ENCODE measurements at regions of chr10 and their contacts with region 1.

Region 1: GRCh38 chr10:113052076-113052830 is 102.2 kb downstream of the TCF7L2 start:
- DNase-seq: no peak
- H3K4me3 ChIP-seq: no peak overlapping the region
- H3K27ac ChIP-seq: peak overlapping the region; percentile 89 to 96
- H3K4me1 ChIP-seq: peaks cover 25 to 85% of the 10 kb centered on the region in 2 donors
- H3K27me3 ChIP-seq: no peaks in the 10 kb centered on the region
- CTCF ChIP-seq: peak in 2 of 3 experiments; percentile 18 to 40

Region 2: GRCh38 chr10:113035791-113036190 is 16.5 kb before region 1 on chr10:
- intact Hi-C with region 1: loop called (anchors 2 kb)
- DNase-seq: peak in 1 of 2 donors; percentile 72
- H3K4me3 ChIP-seq: no peak overlapping the region
- H3K27ac ChIP-seq: peak overlapping the region; percentile 63 to 82
- H3K4me1 ChIP-seq: peaks cover 8 to 36% of the 10 kb centered on the region in 2 donors
- H3K27me3 ChIP-seq: no peaks in the 10 kb centered on the region
- CTCF ChIP-seq: no peak

Region 3: DNA sequence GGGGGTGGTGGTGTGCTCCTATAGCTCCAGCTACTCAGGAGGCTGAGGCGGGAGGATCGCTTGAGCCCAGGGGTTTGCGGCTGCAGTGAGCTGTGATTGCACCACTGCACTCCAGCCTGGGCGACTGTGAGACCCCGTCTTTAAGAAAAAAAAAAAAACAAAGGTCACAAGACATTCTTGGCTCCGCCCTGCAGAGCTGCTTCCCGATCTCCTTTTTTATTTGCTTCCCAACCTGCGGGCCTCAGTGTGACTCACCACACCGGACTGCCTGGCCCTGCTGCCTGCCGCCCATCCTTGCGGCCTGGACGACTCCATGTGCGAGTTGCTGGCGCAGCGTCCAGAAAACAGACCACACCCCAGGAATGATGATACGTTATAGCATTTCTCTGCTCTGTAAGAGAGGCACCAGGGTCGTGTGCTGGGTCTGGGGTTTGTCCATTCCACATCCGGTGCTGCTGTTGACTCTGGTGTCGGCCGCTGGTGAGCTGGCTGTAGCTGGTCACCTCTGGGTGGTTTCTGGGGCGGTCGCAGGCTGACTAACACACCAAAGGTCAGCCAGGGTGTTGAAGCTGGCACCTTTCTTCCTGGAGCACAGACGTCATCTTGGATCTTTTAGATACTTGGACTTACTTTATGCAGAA is 21.4 kb after region 1 on chr10:
- intact Hi-C with region 1: loop called (anchors 2 kb)
- DNase-seq: peak; percentile 69 to 96
- H3K4me3 ChIP-seq: peak overlapping the region in 1 of 2 donors; percentile 19
- H3K27ac ChIP-seq: peak overlapping the region; percentile 83 to 87
- H3K4me1 ChIP-seq: peaks cover 11 to 36% of the 10 kb centered on the region in 2 donors
- H3K27me3 ChIP-seq: no peaks in the 10 kb centered on the region
- CTCF ChIP-seq: no peak

Region 4: GRCh38 chr10:113309791-113310190 is 257.5 kb after region 1 on chr10:
- intact Hi-C with region 1: no loop called
- DNase-seq: no peak
- H3K4me3 ChIP-seq: no peak overlapping the region
- H3K27ac ChIP-seq: no peak overlapping the region
- H3K4me1 ChIP-seq: no peaks in the 10 kb centered on the region
- H3K27me3 ChIP-seq: no peaks in the 10 kb centered on the region
- CTCF ChIP-seq: no peak

Region 5: DNA sequence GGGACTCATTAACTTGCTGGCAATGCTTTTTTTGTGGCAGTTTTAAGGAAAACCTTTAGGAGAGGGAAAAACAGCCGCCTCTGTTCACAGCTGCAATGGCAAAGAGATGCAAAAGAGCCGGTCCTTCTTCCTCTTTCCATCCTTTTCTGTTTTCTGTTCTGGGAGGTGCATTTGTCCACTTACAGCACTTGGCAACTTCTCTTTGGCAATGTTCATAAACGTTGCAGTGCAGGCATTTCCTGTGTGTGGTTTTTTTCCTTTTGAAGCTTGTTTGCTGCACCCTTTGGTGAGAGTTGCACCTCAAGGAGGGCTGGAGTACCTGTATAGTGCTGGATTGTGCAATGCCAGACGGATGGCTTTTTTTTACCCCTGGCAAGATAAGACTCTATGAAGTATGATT is 446.7 kb after region 1 on chr10:
- intact Hi-C with region 1: loop called (anchors 10 kb)
- DNase-seq: no peak
- H3K4me3 ChIP-seq: no peak overlapping the region
- H3K27ac ChIP-seq: no peak overlapping the region
- H3K4me1 ChIP-seq: peaks cover 0 to 35% of the 10 kb centered on the region in 2 donors
- H3K27me3 ChIP-seq: no peaks in the 10 kb centered on the region
- CTCF ChIP-seq: no peak

Measured in ascending aorta (tissue), 2 donors.